Adrenal gland (tissue), 19 donors: ENCODE measurements at regions of chr3 and their contacts with region 1.

Region 1: GRCh38 chr3:128617557-128618397 is 32.8 kb downstream of the RPN1 start:
- DNase-seq: peak; percentile 98 to 99 (median 99)
- H3K4me3 ChIP-seq: peak overlapping the region; percentile 43 to 87 (median 71)
- H3K27ac ChIP-seq: peak overlapping the region; percentile 50 to 91 (median 87)
- H3K4me1 ChIP-seq: peaks cover 15 to 24% of the 10 kb centered on the region in 2 donors
- H3K27me3 ChIP-seq: no peaks in the 10 kb centered on the region
- CTCF ChIP-seq: peak; percentile 81 to 96 (median 91)
- POLR2A ChIP-seq: peak in 1 of 2 donors; percentile 72

Region 2: GRCh38 chr3:128680602-128681368 is 63.0 kb after region 1 on chr3:
- intact Hi-C with region 1: loop called in 1 of 2 experiments (anchors 10 kb)
- DNase-seq: peak; percentile 99
- H3K4me3 ChIP-seq: peak overlapping the region; percentile 0 to 65 (median 59)
- H3K27ac ChIP-seq: peak overlapping the region; percentile 23 to 97 (median 94)
- H3K4me1 ChIP-seq: peaks cover 4 to 11% of the 10 kb centered on the region in 2 donors
- H3K27me3 ChIP-seq: no peaks in the 10 kb centered on the region
- CTCF ChIP-seq: peak; percentile 92 to 100 (median 100)
- POLR2A ChIP-seq: peak; percentile 88 to 89

Region 3: GRCh38 chr3:128794770-128795649 is 177.2 kb after region 1 on chr3:
- intact Hi-C with region 1: loop called in 1 of 2 experiments (anchors 10 kb)
- DNase-seq: peak; percentile 54 to 80 (median 71)
- H3K4me3 ChIP-seq: no peak overlapping the region
- H3K27ac ChIP-seq: peak overlapping the region in 4 of 5 donors; percentile 26 to 66 (median 35)
- H3K4me1 ChIP-seq: peaks cover 7 to 29% of the 10 kb centered on the region in 2 donors
- H3K27me3 ChIP-seq: no peaks in the 10 kb centered on the region
- CTCF ChIP-seq: peak; percentile 67 to 89 (median 80)
- POLR2A ChIP-seq: no peak

Region 4: DNA sequence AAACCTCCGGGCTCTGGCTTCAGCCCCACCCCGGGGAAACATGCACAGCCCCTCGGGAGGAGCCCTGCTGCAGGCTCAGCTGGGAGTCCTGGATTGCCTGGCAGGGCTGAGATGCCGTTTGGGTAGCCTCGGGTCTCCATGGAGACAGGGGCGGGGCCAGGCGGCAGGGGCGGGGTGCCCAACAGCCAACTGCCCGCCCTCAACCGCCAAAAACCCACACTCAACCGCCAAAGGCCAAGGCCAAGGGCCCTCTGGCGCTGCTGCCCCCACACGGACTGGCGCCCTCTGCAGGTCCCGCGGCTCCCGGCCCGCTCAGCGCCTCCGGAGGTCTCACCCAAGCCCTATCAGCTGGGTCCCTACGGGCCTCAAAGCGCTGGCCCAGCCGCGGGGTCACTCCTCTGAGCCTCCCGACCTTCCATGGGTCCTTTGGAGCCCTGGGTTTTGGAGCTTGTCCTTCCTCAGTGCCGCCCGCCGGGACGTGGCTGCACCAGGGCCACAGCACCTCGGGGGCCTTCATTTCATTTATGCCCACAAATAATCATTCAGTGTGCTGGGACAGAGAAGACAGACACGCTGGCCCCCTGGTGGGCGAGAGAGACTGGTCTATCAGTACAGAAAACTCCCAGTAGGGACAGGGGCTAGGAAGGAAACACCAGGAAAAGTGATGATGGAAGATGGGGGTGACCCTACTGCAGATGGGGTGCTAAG is 228.2 kb after region 1 on chr3:
- intact Hi-C with region 1: loop called in 1 of 2 experiments (anchors 5 kb)
- DNase-seq: peak; percentile 86 to 92 (median 91)
- H3K4me3 ChIP-seq: peak overlapping the region in 2 of 4 donors; percentile 5 to 46
- H3K27ac ChIP-seq: peak overlapping the region in 2 of 5 donors; percentile 59 to 63
- H3K4me1 ChIP-seq: peaks cover 7 to 10% of the 10 kb centered on the region in 2 donors
- H3K27me3 ChIP-seq: no peaks in the 10 kb centered on the region
- CTCF ChIP-seq: peak; percentile 49 to 89 (median 60)
- POLR2A ChIP-seq: no peak